A549 (cell line): ENCODE measurements at regions of chr16 and their contacts with region 1.

Region 1: DNA sequence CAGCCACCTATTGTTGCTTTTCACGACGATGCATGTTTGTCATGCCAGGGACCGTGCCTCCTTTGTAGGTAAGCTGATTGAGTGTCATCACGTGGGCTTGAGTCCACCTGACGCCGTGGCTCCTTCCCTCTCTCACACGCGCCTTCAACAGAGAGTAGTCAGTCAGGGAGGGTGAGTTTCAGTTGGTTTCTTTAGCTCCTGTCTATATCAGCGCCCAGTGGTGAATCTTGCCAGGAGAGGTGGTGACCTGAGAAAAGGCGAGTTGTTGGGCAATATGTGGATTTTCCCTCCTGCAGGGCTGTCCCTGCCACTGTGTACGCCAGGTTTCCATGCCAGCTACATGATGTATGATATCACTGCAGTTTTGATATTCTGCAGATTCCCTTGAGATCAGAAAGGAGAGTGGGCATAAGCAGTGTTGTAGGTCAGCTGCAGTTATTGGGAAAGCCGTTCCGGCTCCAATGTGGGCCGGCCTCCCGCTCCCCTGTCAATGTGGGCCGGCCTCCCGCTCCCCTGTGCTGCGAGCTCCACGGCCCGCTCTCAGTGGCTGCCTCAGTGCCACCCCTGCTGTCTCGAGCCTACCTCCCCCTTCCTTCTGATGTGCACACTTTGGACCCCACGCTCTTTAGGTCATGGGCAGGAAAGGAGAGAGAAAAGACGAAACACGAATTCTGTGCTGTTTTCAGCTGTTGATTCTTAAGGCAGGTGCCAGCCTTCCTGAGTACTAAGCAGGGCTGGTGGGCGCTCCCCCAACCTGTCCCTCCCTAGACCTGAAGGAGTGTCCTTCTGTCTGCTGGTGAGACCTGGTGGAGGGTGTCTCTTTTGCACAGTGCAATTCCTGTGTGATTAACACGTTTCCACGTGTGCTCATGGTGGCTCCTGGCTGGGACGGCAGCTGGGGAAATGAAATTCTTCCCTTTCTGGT is 31.5 kb downstream of the BANP start:
- DNase-seq: no peak
- ATAC-seq: peak; percentile 68 to 75; a peak in 5 of 6 replicates
- H3K4me3 ChIP-seq: no peak overlapping the region
- H3K27ac ChIP-seq: peak overlapping the region; percentile 48 to 78; a peak in 5 of 6 replicates
- H3K4me1 ChIP-seq: peaks cover 26% of the 10 kb centered on the region
- CTCF ChIP-seq: no peak
- EP300 ChIP-seq: no peak
- POLR2A ChIP-seq: no peak
- RAD21 ChIP-seq: no peak

Region 2: DNA sequence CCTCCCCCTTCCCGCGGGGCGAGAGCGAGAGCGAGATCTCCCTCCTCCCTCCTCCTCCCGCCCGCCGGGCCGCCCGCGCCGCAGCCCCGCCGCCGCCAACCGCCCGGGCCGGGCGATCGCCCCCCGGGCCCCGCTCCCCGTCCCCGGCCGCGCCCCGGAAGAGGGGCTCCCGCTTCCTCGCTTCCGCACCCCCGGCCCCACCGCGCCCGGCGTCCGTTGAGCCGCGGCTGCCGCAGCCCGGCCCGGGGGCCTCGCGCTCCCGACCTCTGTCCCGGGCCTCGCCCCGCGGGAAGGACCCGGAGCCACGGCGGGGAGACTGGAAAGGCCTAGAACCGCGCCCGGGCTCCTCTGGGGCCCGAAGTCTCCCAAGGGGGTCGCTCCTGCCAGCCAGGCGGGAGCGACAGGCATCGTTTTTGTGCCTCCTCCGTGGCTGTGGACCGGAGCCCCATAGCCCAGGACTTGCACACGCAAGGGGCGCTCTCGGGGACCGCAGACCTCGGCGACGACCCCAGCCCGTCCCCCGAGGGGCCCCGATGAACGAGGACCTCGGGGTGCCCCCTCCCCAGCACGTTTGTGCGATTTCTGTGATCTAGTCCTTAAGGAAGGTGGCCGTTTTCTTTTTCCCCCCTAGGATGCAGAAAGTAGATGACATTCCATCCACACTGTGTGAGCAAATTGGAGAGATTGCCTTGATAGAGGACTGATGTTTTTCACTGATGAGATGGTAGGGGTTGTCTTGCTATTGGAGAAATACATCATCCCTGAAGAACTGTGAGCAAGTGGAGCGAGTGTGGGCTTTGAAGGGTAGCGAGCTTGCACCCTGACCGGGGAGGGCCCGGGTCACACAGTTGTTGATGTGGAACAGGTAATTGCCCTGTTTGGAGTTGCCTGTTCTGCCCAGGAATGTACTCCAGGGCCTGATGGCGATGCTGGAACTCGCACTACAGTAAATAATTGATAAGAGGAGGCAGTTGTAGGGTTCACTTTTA is 30.9 kb before region 1 on chr16:
- CTCF ChIA-PET with region 1: interaction called, 15 read pairs
- POLR2A ChIA-PET with region 1: no interaction called
- DNase-seq: no peak
- ATAC-seq: peak in 1 of 2 experiments; percentile 4; a peak in 2 of 6 replicates
- H3K4me3 ChIP-seq: peak overlapping the region; percentile 98
- H3K27ac ChIP-seq: peak overlapping the region; percentile 95 to 96
- H3K4me1 ChIP-seq: peaks cover 25% of the 10 kb centered on the region
- CTCF ChIP-seq: no peak; the same call in 2 of the 3 replicates
- EP300 ChIP-seq: no peak
- POLR2A ChIP-seq: no peak
- RAD21 ChIP-seq: no peak

Region 3: GRCh38 chr16:87971933-87972332 is 10.8 kb before region 1 on chr16:
- CTCF ChIA-PET with region 1: interaction called, 16 read pairs
- POLR2A ChIA-PET with region 1: interaction called, 4 read pairs
- DNase-seq: peak in 1 of 2 experiments; percentile 13
- ATAC-seq: no peak
- H3K4me3 ChIP-seq: no peak overlapping the region
- H3K27ac ChIP-seq: no peak overlapping the region
- H3K4me1 ChIP-seq: no peaks in the 10 kb centered on the region
- CTCF ChIP-seq: no peak
- EP300 ChIP-seq: no peak
- POLR2A ChIP-seq: no peak
- RAD21 ChIP-seq: no peak

Region 4: GRCh38 chr16:88437373-88437964 is 454.7 kb after region 1 on chr16:
- CTCF ChIA-PET with region 1: interaction called, 21 read pairs
- POLR2A ChIA-PET with region 1: no interaction called
- DNase-seq: peak; percentile 52 to 70
- ATAC-seq: peak in 1 of 2 experiments; percentile 57; a peak in 3 of 6 replicates
- H3K4me3 ChIP-seq: no peak overlapping the region
- H3K27ac ChIP-seq: peak overlapping the region; percentile 27 to 68; a peak in 4 of 6 replicates
- H3K4me1 ChIP-seq: peaks cover 3% of the 10 kb centered on the region; the same call in 1 of the 3 replicates
- CTCF ChIP-seq: peak; percentile 81
- EP300 ChIP-seq: no peak
- POLR2A ChIP-seq: no peak
- RAD21 ChIP-seq: peak; percentile 72 to 81